ENCODE measurements at regions of chr7 and their contacts with region 1.

Region 1: GRCh38 chr7:131327626-131328376 is at the start of gene MKLN1:
- DNase-seq: peak; percentile 53
- ATAC-seq: peak; percentile 96
- H3K4me3 ChIP-seq: peak within 1 kb of the TSS; percentile 85 to 93
- H3K27ac ChIP-seq: peak within 1 kb of the TSS; percentile 98
- H3K4me1 ChIP-seq: peaks cover 43% of the 10 kb centered on the region
- H3K27me3 ChIP-seq: no peaks in the 10 kb centered on the region
- CTCF ChIP-seq: no peak
- total RNA-seq, gene MKLN1: 46.4 TPM

Region 2: GRCh38 chr7:131424219-131424822 is 96.5 kb after region 1 on chr7:
- CTCF ChIA-PET with region 1: no interaction called
- POLR2A ChIA-PET with region 1: no interaction called
- in situ Hi-C with region 1: no loop called
- intact Hi-C with region 1: loop called (anchors 5 kb)
- DNase-seq: peak; percentile 30
- ATAC-seq: peak; percentile 90
- H3K4me3 ChIP-seq: no peak overlapping the region
- H3K27ac ChIP-seq: no peak overlapping the region
- H3K4me1 ChIP-seq: no peaks in the 10 kb centered on the region
- H3K27me3 ChIP-seq: no peaks in the 10 kb centered on the region
- CTCF ChIP-seq: peak; percentile 71; the same call in 1 of the 2 replicates